ENCODE measurements at regions of chr6 and their contacts with region 1.

Region 1: GRCh38 chr6:37207903-37208456 is 38.0 kb downstream of the PIM1 start:
- DNase-seq: peak; percentile 82 to 91 (median 87)
- ATAC-seq: peak; percentile 64 to 71
- H3K4me3 ChIP-seq: no peak overlapping the region
- H3K27ac ChIP-seq: no peak overlapping the region
- H3K4me1 ChIP-seq: no peaks in the 10 kb centered on the region
- H3K27me3 ChIP-seq: no peaks in the 10 kb centered on the region

Region 2: GRCh38 chr6:36759148-36759759 is 448.7 kb before region 1 on chr6:
- intact Hi-C with region 1: loop called in 2 of 4 experiments (anchors 5 to 10 kb)
- DNase-seq: peak; percentile 78 to 93 (median 93)
- ATAC-seq: peak; percentile 82 to 87
- H3K4me3 ChIP-seq: no peak overlapping the region
- H3K27ac ChIP-seq: no peak overlapping the region
- H3K4me1 ChIP-seq: no peaks in the 10 kb centered on the region
- H3K27me3 ChIP-seq: no peaks in the 10 kb centered on the region

Region 3: DNA sequence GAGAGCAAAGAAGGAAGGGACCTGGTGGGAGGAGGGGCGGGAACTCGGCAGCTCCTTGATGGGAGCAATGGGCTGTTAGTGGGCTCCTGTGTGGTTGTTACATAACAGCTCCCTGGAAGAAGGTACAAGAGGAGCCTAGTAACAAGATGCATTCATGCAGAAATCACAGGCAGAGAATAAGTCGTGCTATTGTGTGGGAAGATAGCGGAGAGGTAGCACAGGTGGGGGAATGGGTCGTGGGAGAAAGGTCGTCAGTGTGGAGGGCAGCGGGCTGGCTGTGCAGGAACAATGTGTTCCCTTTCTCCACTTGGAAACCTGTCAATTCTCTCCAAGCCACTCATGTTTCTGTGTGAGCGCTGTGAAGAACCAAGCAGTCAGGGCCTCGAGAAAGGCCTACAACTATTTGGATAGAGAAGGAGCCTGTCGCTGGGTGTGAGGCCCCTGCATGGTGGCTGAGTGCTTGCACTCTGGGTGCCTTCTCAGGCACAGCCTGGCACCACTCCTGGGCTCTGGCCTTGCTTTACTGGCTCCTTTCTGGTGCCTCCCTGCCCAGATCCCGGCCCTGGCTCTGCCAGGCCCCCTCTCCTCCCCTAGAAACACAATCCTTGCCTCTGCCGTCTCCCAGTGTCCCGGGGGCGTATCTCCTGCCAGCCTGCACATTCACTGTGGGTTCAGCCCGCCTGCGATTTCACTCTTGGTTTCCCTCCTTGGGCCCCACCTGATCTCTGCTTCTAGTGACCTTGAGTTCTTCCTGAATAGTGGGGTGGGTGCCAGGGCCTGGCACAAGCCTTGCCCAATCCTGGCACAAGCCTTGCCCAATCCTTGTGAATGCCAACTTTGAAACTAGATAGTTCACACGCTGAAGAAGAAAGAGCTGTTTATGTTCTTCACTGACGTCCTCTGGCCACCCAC is 209.9 kb before region 1 on chr6:
- intact Hi-C with region 1: no loop called
- DNase-seq: peak in 2 of 3 donors; percentile 55 to 74
- ATAC-seq: peak; percentile 63 to 69
- H3K4me3 ChIP-seq: no peak overlapping the region
- H3K27ac ChIP-seq: peak overlapping the region; percentile 93
- H3K4me1 ChIP-seq: no peaks in the 10 kb centered on the region
- H3K27me3 ChIP-seq: no peaks in the 10 kb centered on the region

Region 4: DNA sequence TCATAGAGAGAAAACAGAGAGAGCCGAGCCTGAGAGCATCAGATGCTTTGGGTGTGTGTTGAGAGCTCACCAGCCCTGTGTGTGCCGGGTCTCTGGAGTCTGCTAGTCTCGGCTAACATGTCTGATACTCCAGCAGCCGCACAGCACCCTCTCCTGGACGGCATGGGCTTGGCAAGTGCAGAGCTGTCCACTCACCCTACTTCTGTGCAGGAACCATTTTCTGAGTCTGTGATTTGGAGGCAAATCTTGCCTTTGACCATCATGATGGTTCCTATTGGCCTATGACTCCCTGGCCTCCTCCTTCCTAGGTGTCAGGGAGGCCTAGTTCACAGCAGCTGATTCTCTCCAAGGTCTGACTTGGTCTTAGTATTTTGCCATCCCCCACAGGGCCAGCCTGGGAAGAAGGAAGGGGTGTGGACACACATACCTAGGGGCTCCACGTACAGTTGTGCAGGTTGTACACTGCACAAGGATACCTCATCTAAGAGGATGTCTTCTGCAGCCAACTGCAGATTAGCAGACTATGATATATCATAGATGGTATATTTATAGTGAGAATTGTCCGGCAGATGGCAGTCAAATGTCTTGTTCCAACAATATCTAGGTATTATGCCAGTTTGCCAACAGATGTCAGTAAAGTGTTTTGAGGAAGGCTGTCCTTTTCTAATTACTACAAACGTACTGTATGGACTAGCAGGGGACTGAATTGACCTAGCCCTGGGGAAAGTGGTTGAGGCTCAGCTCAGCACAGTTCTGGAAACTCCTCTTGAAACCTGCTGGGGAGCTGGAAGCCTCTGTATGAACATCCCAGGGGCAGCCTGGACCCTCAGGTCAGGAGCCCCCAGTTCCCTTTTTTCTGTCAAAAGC is 189.5 kb before region 1 on chr6:
- intact Hi-C with region 1: loop called in 2 of 4 experiments (anchors 5 kb)
- DNase-seq: peak; percentile 90 to 96 (median 96)
- ATAC-seq: peak; percentile 95 to 96
- H3K4me3 ChIP-seq: no peak overlapping the region
- H3K27ac ChIP-seq: peak overlapping the region; percentile 15
- H3K4me1 ChIP-seq: peaks cover 3% of the 10 kb centered on the region
- H3K27me3 ChIP-seq: no peaks in the 10 kb centered on the region

Region 5: DNA sequence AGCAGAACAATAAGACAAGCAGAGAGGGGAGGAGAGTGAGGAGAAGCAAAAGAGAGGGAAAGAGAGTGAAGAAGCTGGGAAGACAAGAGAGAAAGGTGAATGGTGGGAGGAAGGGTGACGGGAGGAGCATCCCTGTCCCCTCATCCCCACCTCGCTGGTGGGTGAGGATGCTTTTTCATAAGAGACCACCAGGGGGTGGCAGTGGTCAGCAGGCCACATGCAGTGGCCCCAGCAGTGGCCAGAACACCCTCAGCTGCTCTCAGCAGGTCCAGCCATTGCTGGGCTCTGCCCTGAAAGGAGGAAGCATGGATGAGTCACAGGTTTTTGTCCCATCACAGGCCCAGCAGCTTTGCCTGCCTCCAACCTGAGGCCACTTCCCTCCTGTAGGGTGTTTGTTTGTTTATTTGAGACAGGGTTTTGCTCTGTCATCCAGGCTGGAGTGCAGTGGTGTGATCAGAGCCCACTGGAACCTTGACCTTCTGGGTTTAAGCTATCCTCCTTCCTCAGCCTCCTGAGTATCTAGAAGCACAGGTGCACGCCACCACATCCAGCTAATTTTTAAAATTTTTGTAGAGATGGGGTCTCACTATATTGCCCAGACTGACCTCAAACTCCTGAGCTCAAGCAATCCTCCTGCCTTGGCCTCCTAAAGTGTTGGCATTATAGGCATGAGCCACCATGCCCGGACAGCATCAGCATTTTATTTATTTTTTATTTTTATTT is 178.6 kb before region 1 on chr6:
- intact Hi-C with region 1: loop called in 3 of 4 experiments (anchors 2 to 5 kb)
- DNase-seq: peak; percentile 80 to 87 (median 84)
- ATAC-seq: peak; percentile 90 to 93
- H3K4me3 ChIP-seq: no peak overlapping the region
- H3K27ac ChIP-seq: no peak overlapping the region
- H3K4me1 ChIP-seq: no peaks in the 10 kb centered on the region
- H3K27me3 ChIP-seq: no peaks in the 10 kb centered on the region